Naive thymus-derived CD8-positive, alpha-beta T cell (primary cell): ENCODE measurements at regions of chr5 and their contacts with region 1.

Region 1: DNA sequence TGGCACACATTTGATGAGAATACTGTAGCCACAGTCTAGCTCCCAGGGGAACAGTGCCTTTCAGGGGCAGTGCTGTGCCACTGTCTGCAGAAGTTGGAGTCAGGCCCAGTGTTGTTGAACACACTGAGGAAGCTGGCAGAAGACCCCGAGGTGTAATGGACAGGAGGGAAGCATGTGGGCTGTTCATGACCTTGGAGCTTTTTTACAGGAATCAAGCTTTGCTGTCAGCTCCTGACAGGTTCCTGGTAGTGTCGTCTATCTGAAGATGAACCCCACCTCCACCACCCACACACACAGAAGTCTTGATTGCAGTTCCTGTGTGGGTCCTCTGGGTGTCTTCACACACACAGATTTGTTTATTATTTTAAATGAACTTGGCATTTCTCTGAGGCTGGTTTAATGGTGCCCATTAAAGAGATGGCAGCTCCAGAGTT is 40.3 kb upstream of the TNFAIP8 start:
- DNase-seq: peak in 8 of 10 donors; percentile 43 to 81 (median 64)
- ATAC-seq: peak; percentile 71 to 87
- H3K4me3 Mint-ChIP-seq: peak overlapping the region; percentile 12 to 80 (median 54)
- H3K27ac Mint-ChIP-seq: peak overlapping the region; percentile 60 to 99 (median 94)
- H3K4me1 Mint-ChIP-seq: peaks cover 39 to 94% (median 91%) of the 10 kb centered on the region in 4 donors
- H3K27me3 Mint-ChIP-seq: no peaks in the 10 kb centered on the region

Region 2: DNA sequence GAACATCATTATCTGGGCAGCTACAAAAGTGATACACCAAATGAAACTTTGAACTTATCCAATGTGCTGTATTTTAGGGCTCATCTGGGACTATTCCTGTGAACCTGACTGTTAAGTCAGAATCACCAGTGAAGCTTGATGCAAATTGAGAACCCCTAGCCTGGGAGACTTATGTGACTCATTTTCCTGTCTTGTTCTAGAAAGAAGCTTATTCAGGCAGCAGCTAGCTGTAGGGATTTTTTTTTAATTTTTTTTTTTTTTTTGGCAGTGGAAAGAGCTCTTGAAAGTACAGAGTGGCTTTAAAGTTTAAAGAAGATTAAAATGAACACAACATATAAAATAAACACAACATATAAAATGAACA is 40.8 kb before region 1 on chr5:
- POLR2A ChIA-PET with region 1: interaction called, 42 read pairs
- DNase-seq: no peak
- ATAC-seq: peak in 1 of 2 donors; percentile 43
- H3K4me3 Mint-ChIP-seq: peak overlapping the region; percentile 96 to 100 (median 100)
- H3K27ac Mint-ChIP-seq: peak overlapping the region; percentile 93 to 98 (median 96)
- H3K4me1 Mint-ChIP-seq: peaks cover 42 to 98% (median 88%) of the 10 kb centered on the region in 4 donors
- H3K27me3 Mint-ChIP-seq: peaks cover 0 to 2% (median 0%) of the 10 kb centered on the region in 5 donors

Region 3: DNA sequence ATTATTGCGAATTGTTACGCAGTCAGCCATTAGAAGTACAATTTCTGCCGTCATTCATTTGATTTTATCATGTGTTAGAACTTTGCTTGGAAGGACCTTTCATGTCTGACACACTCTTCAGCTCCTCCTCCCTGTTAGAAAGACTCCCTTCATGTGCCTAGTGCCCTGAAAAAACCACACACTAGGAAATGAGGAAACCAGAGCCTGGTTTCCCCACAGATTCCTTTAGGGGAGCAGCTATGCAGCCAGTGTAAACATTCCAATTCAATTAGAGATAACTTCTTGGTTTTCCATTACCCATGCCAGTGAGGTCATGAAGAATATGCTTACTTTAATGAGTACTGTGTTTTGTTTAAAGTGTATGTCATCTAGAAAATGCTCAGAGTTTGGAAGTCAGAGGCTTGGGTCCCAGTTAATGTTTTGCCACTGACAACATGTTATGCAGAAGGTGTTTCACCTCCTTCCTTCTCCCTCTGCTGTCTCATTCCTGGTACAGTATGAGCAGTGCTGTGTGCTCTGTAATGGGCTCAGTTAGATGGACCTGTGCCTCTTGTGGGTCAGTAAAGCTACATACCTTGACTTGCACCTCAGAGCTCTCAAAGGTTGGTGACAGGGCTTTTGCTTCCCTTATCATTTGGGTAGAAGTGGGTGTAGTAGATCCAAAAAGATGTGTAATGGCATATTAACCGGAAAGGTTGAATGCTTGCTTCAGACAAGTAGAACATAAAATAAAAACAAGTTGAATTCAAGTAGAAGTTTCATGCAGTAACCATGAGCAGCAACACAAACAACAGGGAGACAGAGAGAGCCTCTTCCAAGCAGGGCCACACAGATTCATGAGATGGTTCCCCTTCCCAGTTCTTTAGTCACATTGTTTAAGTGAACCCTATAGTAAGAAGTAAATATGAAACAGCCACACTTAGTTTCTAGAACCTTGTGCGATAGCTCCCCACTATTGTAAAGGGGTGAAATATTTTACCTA is 12.3 kb before region 1 on chr5:
- POLR2A ChIA-PET with region 1: interaction called, 31 read pairs
- DNase-seq: peak in 1 of 10 donors; percentile 34
- ATAC-seq: peak; percentile 52 to 71
- H3K4me3 Mint-ChIP-seq: peak overlapping the region; percentile 31 to 89 (median 72)
- H3K27ac Mint-ChIP-seq: peak overlapping the region; percentile 85 to 100 (median 97)
- H3K4me1 Mint-ChIP-seq: peaks cover 44 to 95% (median 84%) of the 10 kb centered on the region in 4 donors
- H3K27me3 Mint-ChIP-seq: no peaks in the 10 kb centered on the region

Region 4: DNA sequence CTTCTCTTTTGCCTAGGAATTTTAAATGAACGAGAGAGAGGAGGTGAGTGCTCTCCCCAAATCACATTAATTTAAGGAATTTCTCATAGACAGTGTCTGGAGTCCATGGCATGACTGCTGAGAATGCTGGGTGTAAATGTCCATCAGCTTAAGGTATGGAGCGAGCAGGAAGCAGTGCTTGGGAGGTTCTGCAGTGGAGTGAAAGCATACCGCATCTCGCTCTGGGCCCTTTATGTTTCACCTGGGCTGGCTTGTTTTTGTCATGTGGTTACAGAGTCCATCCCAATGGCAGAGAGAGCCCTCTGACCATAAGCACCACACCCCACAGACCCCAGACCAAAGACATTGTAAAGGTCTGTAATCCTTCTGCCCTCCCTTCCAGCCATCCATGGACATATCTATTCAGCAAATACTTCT is 19.7 kb after region 1 on chr5:
- POLR2A ChIA-PET with region 1: interaction called, 18 read pairs
- DNase-seq: no peak
- ATAC-seq: no peak
- H3K4me3 Mint-ChIP-seq: peak overlapping the region; percentile 64 to 89 (median 78)
- H3K27ac Mint-ChIP-seq: peak overlapping the region; percentile 89 to 99 (median 95)
- H3K4me1 Mint-ChIP-seq: peaks cover 55 to 99% (median 95%) of the 10 kb centered on the region in 4 donors
- H3K27me3 Mint-ChIP-seq: no peaks in the 10 kb centered on the region

Region 5: DNA sequence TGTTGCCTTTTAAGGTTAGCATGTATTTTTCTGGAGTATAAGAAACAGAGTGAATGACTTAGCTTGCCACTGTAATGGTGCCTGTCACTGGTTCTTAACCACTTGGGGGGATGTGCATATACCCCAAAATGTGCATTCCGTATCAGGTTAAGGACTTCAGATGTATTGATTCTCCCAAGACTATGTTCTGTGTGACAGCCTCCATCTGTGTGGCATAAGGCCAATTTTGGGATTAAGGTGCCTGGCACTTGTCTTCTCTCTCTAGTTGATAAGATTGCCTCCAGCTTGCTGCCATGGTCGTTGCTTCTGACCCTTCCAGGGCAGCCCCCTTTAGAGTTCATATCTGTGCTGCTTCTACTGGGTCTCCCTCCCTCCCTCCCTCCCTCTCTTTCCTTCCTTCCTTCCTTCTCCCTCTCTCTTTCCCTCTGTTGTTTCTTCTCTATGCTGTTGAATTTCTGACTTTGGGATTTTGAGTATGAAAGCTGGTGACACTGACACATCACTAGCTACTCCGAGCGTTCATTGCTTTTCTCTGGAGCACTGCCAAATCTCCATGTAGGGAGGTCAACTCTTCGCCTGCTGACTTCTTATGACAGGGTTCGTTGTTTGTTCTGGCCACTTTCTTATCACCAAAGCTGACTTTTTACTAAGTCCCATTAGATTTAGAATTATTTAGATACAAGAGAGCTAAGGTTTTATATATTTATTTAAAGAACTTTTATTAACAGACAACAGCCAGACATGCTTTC is 71.2 kb after region 1 on chr5:
- POLR2A ChIA-PET with region 1: no interaction called
- DNase-seq: no peak
- ATAC-seq: no peak
- H3K4me3 Mint-ChIP-seq: peak overlapping the region in 4 of 10 donors; percentile 10 to 55 (median 26)
- H3K27ac Mint-ChIP-seq: peak overlapping the region; percentile 15 to 91 (median 83)
- H3K4me1 Mint-ChIP-seq: peaks cover 39 to 97% (median 82%) of the 10 kb centered on the region in 4 donors
- H3K27me3 Mint-ChIP-seq: no peaks in the 10 kb centered on the region

Region 6: DNA sequence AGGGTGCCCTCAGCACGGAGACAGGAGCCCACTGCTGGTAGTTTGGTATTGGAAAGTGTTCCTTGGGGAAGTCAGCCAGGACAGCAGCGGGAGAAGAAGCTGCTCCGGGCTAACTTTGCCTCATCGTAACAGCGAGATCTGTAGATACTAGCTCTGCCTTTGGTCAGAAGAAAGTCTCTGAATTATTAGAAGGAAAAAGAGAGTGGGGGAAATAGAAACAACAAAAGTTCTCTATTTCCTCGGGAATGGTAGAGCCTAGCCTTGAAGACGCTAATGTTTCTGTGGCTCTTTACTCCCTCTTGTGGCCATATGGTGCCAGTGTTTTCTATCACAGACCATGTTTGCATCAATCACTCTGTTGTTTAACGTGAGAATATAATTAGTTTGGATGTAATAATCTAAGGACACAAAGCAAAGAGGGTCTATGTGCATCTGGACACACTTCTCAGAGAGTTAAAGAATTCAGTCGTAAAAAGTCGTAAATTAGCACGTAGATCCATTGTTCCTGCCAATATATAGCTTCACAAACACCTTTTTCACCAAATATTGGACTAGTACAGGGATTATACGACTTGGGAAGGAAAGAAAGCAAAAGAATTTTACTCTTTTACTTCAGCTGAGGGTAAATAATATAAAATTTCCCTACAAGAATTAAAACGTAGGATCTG is 96.5 kb after region 1 on chr5:
- POLR2A ChIA-PET with region 1: interaction called, 13 read pairs
- DNase-seq: peak; percentile 7 to 79 (median 58)
- ATAC-seq: peak; percentile 84 to 94
- H3K4me3 Mint-ChIP-seq: peak overlapping the region; percentile 85 to 95 (median 92)
- H3K27ac Mint-ChIP-seq: peak overlapping the region; percentile 42 to 94 (median 87)
- H3K4me1 Mint-ChIP-seq: peaks cover 3 to 42% (median 13%) of the 10 kb centered on the region in 4 donors
- H3K27me3 Mint-ChIP-seq: peaks cover 0 to 3% (median 0%) of the 10 kb centered on the region in 5 donors

Region 7: DNA sequence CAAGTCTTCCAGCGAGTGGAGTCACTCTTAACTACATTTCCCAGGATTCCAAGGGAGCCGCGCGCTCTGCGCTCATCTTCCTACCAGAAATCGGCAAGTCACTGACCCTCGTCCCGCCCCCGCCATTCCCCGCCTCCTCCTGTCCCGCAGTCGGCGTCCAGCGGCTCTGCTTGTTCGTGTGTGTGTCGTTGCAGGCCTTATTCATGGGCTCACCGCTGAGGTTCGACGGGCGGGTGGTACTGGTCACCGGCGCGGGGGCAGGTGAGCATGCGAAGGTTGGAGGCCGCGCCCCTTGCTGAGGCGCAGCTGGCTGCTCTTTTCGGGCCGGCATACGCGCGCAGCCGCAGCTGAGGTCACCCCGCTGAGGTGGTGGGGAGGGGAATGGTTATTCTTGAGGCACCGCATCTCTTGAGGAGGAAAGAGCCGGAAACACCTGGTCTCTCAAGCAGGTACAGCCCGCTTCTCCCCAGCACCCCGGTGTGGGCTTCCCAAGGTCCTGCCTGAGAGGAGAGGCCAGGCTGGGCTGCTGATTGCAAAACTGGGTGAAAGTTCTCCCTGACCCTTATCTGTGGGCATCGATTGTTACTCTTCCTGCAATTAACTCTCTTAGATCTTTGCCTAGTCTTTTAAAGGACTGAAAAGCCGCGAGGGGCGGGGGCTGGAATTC is 137.0 kb after region 1 on chr5 and contains the start of gene HSD17B4:
- POLR2A ChIA-PET with region 1: no interaction called
- DNase-seq: peak; percentile 56 to 89 (median 79)
- ATAC-seq: peak; percentile 95 to 96
- H3K4me3 Mint-ChIP-seq: peak within 1 kb of the TSS; percentile 92 to 97 (median 94)
- H3K27ac Mint-ChIP-seq: peak within 1 kb of the TSS; percentile 65 to 97 (median 92)
- H3K4me1 Mint-ChIP-seq: peaks cover 7 to 36% (median 27%) of the 10 kb centered on the region in 4 donors
- H3K27me3 Mint-ChIP-seq: peaks cover 0 to 3% (median 0%) of the 10 kb centered on the region in 5 donors
- polyA plus RNA-seq, gene HSD17B4: 43.3 to 64.9 (median 47.3) TPM

Region 8: DNA sequence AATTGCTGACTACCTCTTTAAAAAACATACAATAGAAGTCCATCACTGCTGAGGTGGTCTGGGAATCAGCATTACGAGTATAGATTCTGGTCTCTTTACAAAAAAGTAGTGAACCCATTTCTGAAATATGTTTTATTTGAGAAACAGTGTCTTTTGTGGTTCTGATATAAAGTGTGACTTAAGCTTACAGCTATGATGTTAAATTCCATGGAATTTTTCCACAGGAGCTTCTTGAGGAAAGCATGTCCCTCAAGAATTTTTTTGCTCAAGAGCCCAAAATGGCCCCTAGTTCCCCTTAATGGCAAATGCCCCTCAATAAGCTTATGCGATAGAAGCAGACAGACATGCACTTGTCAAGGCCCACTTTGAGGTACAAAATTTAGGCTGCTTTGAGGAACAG is 579.5 kb after region 1 on chr5:
- POLR2A ChIA-PET with region 1: no interaction called
- DNase-seq: no peak
- ATAC-seq: no peak
- H3K4me3 Mint-ChIP-seq: no peak overlapping the region
- H3K27ac Mint-ChIP-seq: no peak overlapping the region
- H3K4me1 Mint-ChIP-seq: no peaks in the 10 kb centered on the region
- H3K27me3 Mint-ChIP-seq: no peaks in the 10 kb centered on the region